Right lobe of liver (tissue), 6 donors: ENCODE measurements at regions of chr19 and their contacts with region 1.

Region 1: GRCh38 chr19:21482863-21483276 is 22.5 kb upstream of the ZNF429 start:
- DNase-seq: peak; percentile 29 to 63 (median 52)
- ATAC-seq: peak; percentile 59 to 77 (median 66)
- H3K4me3 ChIP-seq: no peak overlapping the region
- H3K27ac ChIP-seq: no peak overlapping the region
- H3K4me1 ChIP-seq: no peaks in the 10 kb centered on the region
- H3K27me3 ChIP-seq: no peaks in the 10 kb centered on the region
- CTCF ChIP-seq: peak; percentile 20 to 61 (median 56)
- POLR2A ChIP-seq: no peak

Region 2: DNA sequence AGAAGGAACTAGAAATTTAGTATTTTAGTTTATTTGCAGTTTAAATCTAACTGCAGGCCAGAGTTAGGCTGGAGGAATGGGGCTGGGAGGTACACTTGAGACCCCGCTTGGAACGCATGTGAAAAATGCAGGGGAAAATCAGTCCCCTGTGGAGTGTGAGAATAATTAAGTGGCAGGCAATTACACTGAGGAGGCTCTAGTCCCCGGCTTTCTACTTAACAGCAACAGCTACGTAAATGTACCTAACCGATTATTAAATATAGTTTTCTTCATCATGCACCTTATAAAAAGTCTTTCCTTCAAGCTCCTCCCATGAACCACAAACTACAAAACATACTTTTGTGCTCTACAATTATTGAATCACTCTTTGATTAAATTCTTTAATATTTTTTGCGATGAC is 154.5 kb before region 1 on chr19:
- intact Hi-C with region 1: no loop called
- DNase-seq: no peak
- ATAC-seq: no peak
- H3K4me3 ChIP-seq: peak overlapping the region; percentile 75 to 83 (median 82)
- H3K27ac ChIP-seq: peak overlapping the region; percentile 78 to 94 (median 85)
- H3K4me1 ChIP-seq: peaks cover 0 to 9% (median 0%) of the 10 kb centered on the region in 4 donors
- H3K27me3 ChIP-seq: no peaks in the 10 kb centered on the region
- CTCF ChIP-seq: no peak
- POLR2A ChIP-seq: no peak

Region 3: GRCh38 chr19:21434967-21435544 is 47.8 kb before region 1 on chr19:
- intact Hi-C with region 1: no loop called
- DNase-seq: no peak
- ATAC-seq: no peak
- H3K4me3 ChIP-seq: no peak overlapping the region
- H3K27ac ChIP-seq: no peak overlapping the region
- H3K4me1 ChIP-seq: no peaks in the 10 kb centered on the region
- H3K27me3 ChIP-seq: no peaks in the 10 kb centered on the region
- CTCF ChIP-seq: no peak
- POLR2A ChIP-seq: no peak

Region 4: DNA sequence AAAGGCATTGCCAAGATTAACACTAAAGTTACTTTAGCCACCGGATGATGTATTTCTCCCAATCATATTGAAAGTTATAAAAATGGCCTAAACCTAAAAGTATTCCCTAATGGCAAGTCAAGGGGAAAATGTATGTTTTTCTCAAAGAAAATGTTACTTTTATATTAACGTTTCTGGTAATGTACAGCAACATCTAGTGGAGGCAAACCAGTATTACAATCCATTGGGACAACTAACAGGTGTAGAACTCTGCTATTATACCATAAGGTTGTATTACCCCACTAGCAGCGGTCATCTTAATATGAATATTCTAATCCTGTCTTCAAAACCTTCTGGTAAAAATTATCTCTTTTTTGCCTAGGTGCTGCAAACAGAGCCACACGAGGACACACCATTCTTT is 215.3 kb after region 1 on chr19:
- intact Hi-C with region 1: loop called in 1 of 2 experiments (anchors 10 kb)
- DNase-seq: no peak
- ATAC-seq: peak; percentile 55 to 67 (median 62)
- H3K4me3 ChIP-seq: no peak overlapping the region
- H3K27ac ChIP-seq: no peak overlapping the region
- H3K4me1 ChIP-seq: no peaks in the 10 kb centered on the region
- H3K27me3 ChIP-seq: no peaks in the 10 kb centered on the region
- CTCF ChIP-seq: peak; percentile 61 to 78 (median 68)
- POLR2A ChIP-seq: no peak

Region 5: DNA sequence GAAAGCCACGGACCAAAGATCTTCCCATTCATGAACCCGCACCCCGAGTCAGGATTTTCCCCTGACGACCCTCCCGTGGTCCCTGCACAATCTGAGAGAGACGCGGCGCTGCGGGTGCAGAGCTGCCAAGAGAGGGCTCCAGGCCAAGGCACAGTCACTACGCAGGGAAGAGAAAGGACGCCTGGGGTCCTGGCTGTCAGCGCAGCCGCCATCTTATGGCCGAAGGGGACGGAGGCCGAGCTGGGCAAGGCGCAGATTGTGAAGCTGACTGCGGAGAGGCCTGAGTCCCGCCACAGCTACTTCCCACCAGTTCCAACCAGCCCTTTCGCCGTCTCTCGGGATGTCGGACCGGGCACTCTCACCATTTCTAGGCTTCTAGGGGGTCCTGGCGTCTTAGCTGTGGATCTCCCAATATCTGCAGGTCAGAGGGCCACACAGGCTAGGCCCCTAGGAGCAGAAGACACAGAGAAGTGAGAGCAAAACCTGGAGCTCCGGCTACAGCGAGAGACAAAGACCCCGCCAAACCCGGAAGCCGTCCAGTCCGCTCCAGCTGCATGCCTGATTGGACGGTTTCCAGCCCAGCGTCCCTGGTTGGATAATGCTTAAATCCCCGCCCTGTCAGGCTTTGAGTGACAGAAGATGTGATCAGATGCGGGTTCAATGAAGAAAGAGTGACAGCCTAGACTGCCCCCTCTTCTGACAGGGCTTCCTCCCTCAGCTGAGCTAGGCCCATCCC is 284.4 kb after region 1 on chr19 and contains the start of gene ZNF100:
- intact Hi-C with region 1: no loop called
- DNase-seq: peak; percentile 91 to 94 (median 93)
- ATAC-seq: peak; percentile 96 to 97 (median 96)
- H3K4me3 ChIP-seq: peak within 1 kb of the TSS; percentile 80 to 88 (median 80)
- H3K27ac ChIP-seq: peak within 1 kb of the TSS; percentile 40 to 82 (median 69)
- H3K4me1 ChIP-seq: peaks cover 0 to 5% (median 0%) of the 10 kb centered on the region in 4 donors
- H3K27me3 ChIP-seq: no peaks in the 10 kb centered on the region
- CTCF ChIP-seq: no peak
- POLR2A ChIP-seq: peak; percentile 59
- total RNA-seq, gene ZNF100: 1.4 to 4.1 (median 1.9) TPM